ENCODE measurements at regions of chr7 and their contacts with region 1.

Region 1: DNA sequence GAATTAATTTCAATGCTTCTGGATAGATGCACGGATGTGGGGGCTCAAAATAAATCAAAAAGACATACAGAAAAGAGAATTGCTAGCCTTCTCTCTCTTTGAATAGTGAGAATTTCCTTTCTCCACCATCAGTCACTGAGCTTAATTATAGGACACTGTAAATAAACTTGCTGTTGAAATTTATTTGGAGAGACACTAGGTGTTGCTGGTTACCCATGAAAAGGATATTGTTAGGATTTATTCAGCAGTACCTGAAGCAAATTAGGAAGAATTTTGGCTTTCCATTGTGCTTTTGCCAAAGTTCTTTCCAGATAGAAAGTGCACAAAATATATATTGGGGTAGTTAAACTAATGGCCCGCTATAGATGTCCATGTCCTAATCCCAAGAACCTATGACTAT is 27.6 kb downstream of the GCC1 start:
- DNase-seq: no peak
- H3K4me3 ChIP-seq: no peak overlapping the region
- H3K27ac ChIP-seq: no peak overlapping the region
- H3K4me1 ChIP-seq: no peaks in the 10 kb centered on the region
- H3K27me3 ChIP-seq: no peaks in the 10 kb centered on the region
- CTCF ChIP-seq: peak in 1 of 2 donors; percentile 6

Region 2: DNA sequence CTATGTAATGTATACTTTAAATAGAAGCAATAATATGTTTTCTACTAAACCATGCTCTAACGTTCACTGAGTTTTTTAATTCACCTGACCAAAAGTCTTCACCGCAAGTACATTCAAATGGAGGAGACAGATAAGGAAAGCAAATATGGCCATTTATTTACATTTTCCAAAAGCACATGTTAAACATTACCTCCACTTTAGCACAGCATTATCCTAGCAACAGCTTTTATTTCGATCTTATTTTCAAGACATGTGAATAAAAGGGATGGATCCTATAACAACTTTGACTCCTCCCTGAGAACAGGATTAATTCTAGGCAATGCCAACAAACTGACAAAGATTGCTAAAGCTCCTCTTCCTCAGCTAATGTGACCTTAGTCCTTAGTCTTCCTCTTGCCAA is 293.6 kb before region 1 on chr7:
- CTCF ChIA-PET with region 1: no interaction called
- dilution Hi-C with region 1: no loop called
- in situ Hi-C with region 1: no loop called
- intact Hi-C with region 1: no loop called
- DNase-seq: no peak
- H3K4me3 ChIP-seq: no peak overlapping the region
- H3K27ac ChIP-seq: no peak overlapping the region
- H3K4me1 ChIP-seq: no peaks in the 10 kb centered on the region
- H3K27me3 ChIP-seq: no peaks in the 10 kb centered on the region
- CTCF ChIP-seq: no peak

Region 3: GRCh38 chr7:127322351-127322750 is 235.5 kb before region 1 on chr7:
- CTCF ChIA-PET with region 1: no interaction called
- dilution Hi-C with region 1: no loop called
- in situ Hi-C with region 1: no loop called
- intact Hi-C with region 1: no loop called
- DNase-seq: no peak
- H3K4me3 ChIP-seq: no peak overlapping the region
- H3K27ac ChIP-seq: no peak overlapping the region
- H3K4me1 ChIP-seq: no peaks in the 10 kb centered on the region
- H3K27me3 ChIP-seq: peaks cover 1% of the 10 kb centered on the region
- CTCF ChIP-seq: no peak

Region 4: GRCh38 chr7:127619681-127620405 is 62.0 kb after region 1 on chr7:
- CTCF ChIA-PET with region 1: no interaction called
- dilution Hi-C with region 1: loop called (anchors 5 kb)
- in situ Hi-C with region 1: no loop called
- intact Hi-C with region 1: no loop called
- DNase-seq: peak; percentile 34
- H3K4me3 ChIP-seq: no peak overlapping the region
- H3K27ac ChIP-seq: no peak overlapping the region
- H3K4me1 ChIP-seq: no peaks in the 10 kb centered on the region
- H3K27me3 ChIP-seq: peaks cover 4% of the 10 kb centered on the region
- CTCF ChIP-seq: no peak

Region 5: DNA sequence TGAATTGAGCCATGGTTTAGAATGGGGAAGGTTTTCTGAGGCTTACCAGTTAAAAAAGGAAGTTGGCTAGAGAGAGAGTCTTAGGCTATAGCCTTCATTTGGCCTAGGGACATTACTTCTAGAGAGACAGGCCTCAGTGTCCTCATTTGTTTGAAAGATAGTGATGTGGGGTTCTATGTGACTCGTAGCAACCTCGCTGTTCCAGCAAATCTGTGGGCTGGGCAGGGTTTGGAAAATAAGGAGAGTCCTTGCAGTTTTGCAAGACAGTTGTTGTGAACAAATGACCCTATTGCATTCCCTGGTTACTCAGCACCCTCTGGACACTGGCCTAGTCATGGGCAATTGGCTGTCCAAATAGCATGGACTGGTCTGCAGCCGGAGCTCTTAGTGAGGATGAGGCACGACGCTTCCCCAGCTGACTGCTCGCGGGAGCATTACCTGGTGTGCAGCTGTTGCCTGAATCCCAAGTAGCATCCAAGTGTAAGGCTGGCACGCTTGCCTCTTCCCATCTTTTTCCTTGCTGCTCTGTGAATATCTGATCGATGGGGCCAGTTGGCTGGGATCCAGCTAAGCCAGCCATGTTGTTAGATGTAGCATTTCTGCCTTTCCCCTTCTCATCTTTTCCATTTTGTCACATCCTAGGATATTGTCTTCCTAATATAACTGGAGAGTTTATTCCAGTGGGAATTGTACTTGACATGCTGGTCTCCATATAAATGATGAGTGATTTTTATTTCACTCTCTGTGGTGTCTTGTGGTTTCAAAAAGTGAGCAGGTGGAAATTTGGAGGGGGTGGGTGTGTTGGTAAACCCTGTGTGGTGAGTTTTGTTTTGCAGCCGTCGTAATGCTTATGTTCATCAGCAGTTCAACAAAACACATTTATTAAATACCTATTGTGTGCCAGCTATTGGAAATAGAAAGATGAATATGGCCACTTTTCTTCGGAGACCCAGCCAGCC is 194.0 kb after region 1 on chr7:
- CTCF ChIA-PET with region 1: no interaction called
- dilution Hi-C with region 1: no loop called
- in situ Hi-C with region 1: no loop called
- intact Hi-C with region 1: no loop called
- DNase-seq: peak; percentile 10
- H3K4me3 ChIP-seq: no peak overlapping the region
- H3K27ac ChIP-seq: no peak overlapping the region
- H3K4me1 ChIP-seq: no peaks in the 10 kb centered on the region
- H3K27me3 ChIP-seq: no peaks in the 10 kb centered on the region
- CTCF ChIP-seq: no peak